ENCODE measurements at regions of chr7 and their contacts with region 1.

Region 1: GRCh38 chr7:139118234-139118804 is 8.8 kb upstream of the ZC3HAV1 start:
- DNase-seq: peak; percentile 80
- ATAC-seq: peak; percentile 83
- H3K4me3 ChIP-seq: peak overlapping the region; percentile 46; the same call in 1 of the 2 replicates
- H3K27ac ChIP-seq: peak overlapping the region; percentile 64
- H3K4me1 ChIP-seq: peaks cover 25% of the 10 kb centered on the region
- H3K27me3 ChIP-seq: no peaks in the 10 kb centered on the region
- CTCF ChIP-seq: peak in 2 of 3 experiments; percentile 17 to 27; a peak in 3 of 6 replicates
- EP300 ChIP-seq: peak; percentile 87 to 89; a peak in 2 of 4 replicates
- POLR2A ChIP-seq: no peak
- RAD21 ChIP-seq: no peak

Region 2: DNA sequence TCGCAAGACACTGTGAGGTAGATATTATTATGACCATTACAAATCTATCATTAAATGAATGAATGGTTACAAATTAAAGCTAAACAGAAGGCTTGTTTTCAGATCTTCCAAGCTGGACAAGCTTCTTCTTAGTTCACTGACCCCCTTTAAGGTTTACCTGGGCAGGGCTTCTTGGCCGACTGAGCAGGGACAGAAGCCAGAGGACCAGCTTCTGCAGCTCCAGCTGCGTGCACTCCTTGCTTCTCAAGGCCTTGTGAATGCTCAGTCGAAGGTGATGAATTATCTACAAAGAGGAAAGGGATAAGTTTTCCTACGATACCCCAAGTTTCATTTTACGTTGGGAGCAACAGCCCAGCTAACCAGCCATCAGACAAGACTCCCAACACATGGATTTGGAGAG is 91.8 kb before region 1 on chr7:
- CTCF ChIA-PET with region 1: no interaction called
- POLR2A ChIA-PET with region 1: no interaction called
- RAD21 ChIA-PET with region 1: no interaction called
- SMC1A ChIA-PET with region 1: no interaction called
- in situ Hi-C with region 1: no loop called
- intact Hi-C with region 1: no loop called
- DNase-seq: no peak
- ATAC-seq: no peak
- H3K4me3 ChIP-seq: no peak overlapping the region
- H3K27ac ChIP-seq: no peak overlapping the region
- H3K4me1 ChIP-seq: no peaks in the 10 kb centered on the region
- H3K27me3 ChIP-seq: no peaks in the 10 kb centered on the region
- CTCF ChIP-seq: no peak
- EP300 ChIP-seq: no peak
- POLR2A ChIP-seq: no peak
- RAD21 ChIP-seq: no peak

Region 3: GRCh38 chr7:139095194-139095659 is 23.1 kb before region 1 on chr7:
- CTCF ChIA-PET with region 1: interaction called, 10 read pairs
- POLR2A ChIA-PET with region 1: interaction called, 11 read pairs
- RAD21 ChIA-PET with region 1: interaction called, 14 read pairs
- SMC1A ChIA-PET with region 1: interaction called, 13 read pairs
- in situ Hi-C with region 1: no loop called
- intact Hi-C with region 1: no loop called
- DNase-seq: peak; percentile 88
- ATAC-seq: peak; percentile 99
- H3K4me3 ChIP-seq: peak overlapping the region; percentile 65
- H3K27ac ChIP-seq: peak overlapping the region; percentile 70
- H3K4me1 ChIP-seq: peaks cover 20% of the 10 kb centered on the region
- H3K27me3 ChIP-seq: no peaks in the 10 kb centered on the region
- CTCF ChIP-seq: 0 out of 6 replicates have a peak, but pooled peaks of 2 of the 3 experiments have one; percentile 2 to 5
- EP300 ChIP-seq: peak in 1 of 2 experiments; percentile 38; a peak in 1 of 4 replicates
- POLR2A ChIP-seq: peak; percentile 74
- RAD21 ChIP-seq: no peak

Region 4: GRCh38 chr7:139104091-139104450 is 14.2 kb before region 1 on chr7:
- CTCF ChIA-PET with region 1: no interaction called
- POLR2A ChIA-PET with region 1: interaction called, 10 read pairs
- RAD21 ChIA-PET with region 1: interaction called, 9 read pairs
- SMC1A ChIA-PET with region 1: interaction called, 13 read pairs
- in situ Hi-C with region 1: no loop called
- intact Hi-C with region 1: loop called (anchors 1 kb)
- DNase-seq: no peak
- ATAC-seq: peak; percentile 7
- H3K4me3 ChIP-seq: peak overlapping the region; percentile 72
- H3K27ac ChIP-seq: peak overlapping the region; percentile 74
- H3K4me1 ChIP-seq: peaks cover 3% of the 10 kb centered on the region; the same call in 1 of the 2 replicates
- H3K27me3 ChIP-seq: no peaks in the 10 kb centered on the region
- CTCF ChIP-seq: no peak
- EP300 ChIP-seq: no peak
- POLR2A ChIP-seq: no peak
- RAD21 ChIP-seq: no peak

Region 5: DNA sequence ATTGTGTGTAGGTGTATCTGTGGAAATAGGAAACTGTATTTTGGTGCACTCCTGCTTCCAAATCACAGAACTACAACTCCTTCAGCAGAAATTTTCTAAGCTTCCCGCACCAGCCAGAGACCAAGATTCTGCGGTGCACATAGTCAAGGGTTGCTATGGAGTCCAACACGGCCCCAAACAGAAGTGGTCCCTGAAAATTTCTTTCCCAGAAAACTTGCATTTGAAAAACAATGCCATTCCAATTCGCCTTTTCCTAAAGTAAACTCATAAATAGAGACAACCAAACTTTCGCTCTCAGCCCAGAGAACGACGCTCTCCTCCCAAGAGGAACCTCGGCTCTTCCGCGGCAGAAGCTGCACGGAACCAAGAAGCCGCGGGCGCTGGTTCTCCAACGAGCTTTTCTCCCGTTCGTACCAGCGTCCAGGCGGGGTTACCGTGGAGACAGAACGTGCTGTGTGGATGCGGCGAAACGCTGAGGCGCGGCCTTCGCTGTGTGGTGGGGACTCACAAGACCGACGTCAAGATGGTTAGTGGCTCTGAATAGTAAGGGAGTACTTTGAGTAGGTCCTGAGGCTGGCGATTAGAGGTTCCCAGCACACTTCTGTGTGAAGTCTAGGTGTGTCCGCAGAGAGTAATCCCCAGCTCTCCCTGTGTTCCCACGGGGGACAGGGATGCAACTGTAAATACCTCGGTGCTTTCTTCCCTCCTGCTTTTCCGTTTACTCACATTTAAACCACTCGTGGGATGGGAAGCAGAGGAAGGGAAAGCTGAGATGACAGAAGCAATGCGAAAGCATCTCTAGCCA is 15.2 kb after region 1 on chr7:
- CTCF ChIA-PET with region 1: interaction called, 13 read pairs
- POLR2A ChIA-PET with region 1: interaction called, 7 read pairs
- RAD21 ChIA-PET with region 1: interaction called, 6 read pairs
- SMC1A ChIA-PET with region 1: interaction called, 20 read pairs
- in situ Hi-C with region 1: no loop called
- intact Hi-C with region 1: no loop called
- DNase-seq: peak; percentile 53
- ATAC-seq: peak; percentile 98
- H3K4me3 ChIP-seq: peak overlapping the region; percentile 77
- H3K27ac ChIP-seq: no peak overlapping the region; the same call in 1 of the 2 replicates
- H3K4me1 ChIP-seq: peaks cover 13% of the 10 kb centered on the region; the same call in 1 of the 2 replicates
- H3K27me3 ChIP-seq: no peaks in the 10 kb centered on the region
- CTCF ChIP-seq: no peak
- EP300 ChIP-seq: 0 out of 4 replicates have a peak, but pooled peaks of 1 of the 2 experiments have one; percentile 29
- POLR2A ChIP-seq: peak; percentile 75
- RAD21 ChIP-seq: peak; percentile 22; the same call in 1 of the 2 replicates

Region 6: GRCh38 chr7:139359366-139360209 is 241.3 kb after region 1 on chr7 and contains the start of gene LUC7L2:
- CTCF ChIA-PET with region 1: no interaction called
- POLR2A ChIA-PET with region 1: no interaction called
- RAD21 ChIA-PET with region 1: no interaction called
- SMC1A ChIA-PET with region 1: no interaction called
- in situ Hi-C with region 1: loop called (anchors 5 kb)
- intact Hi-C with region 1: loop called (anchors 5 kb)
- DNase-seq: peak; percentile 94
- ATAC-seq: peak; percentile 84
- H3K4me3 ChIP-seq: peak within 1 kb of the TSS; percentile 95
- H3K27ac ChIP-seq: peak within 1 kb of the TSS; percentile 98
- H3K4me1 ChIP-seq: no peaks in the 10 kb centered on the region
- H3K27me3 ChIP-seq: no peaks in the 10 kb centered on the region
- CTCF ChIP-seq: peak in 1 of 3 experiments; percentile 7; a peak in 2 of 6 replicates
- EP300 ChIP-seq: peak in 1 of 2 experiments; percentile 36; a peak in 1 of 4 replicates
- POLR2A ChIP-seq: peak; percentile 97
- RAD21 ChIP-seq: no peak
- polyA plus RNA-seq, gene LUC7L2: 31.7 to 37.8 TPM

Region 7: DNA sequence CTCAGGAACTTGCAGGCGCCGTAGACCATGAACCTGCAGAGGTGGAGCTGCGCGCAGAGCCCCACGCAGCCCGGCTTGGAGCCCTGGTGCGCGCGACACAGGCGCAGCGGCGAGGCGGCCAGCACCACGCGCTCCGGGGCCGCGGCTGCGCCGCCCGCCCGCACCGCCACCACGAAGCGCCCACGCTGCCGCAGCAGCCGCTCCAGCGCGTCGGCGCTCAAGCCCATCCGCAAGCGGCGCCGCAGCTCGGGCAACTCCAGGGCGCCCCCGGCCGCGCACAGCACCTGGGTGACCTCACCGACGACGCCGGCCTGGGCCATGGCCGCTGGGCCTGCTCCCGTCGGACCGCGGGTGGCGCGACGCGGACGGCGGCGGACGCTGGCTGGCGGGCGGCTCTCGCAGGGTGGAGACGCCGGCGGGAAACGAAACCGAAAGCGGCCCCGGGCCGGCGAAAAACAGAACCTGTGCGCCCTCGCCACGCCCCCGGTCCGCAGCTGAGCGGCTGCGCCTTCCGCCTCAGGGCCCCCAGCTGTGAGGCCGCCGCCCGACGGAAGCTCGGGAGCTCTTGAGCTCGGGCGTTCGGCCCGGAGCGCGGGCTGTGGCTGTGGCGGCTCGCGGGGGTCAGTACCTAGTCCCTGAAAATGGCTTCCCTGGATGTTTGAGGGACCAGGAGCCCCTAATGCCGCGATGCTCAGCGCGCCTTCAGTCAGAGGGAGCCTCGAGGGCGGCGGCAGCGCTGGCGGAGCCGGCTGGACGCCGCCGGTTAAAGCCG is 944.4 kb after region 1 on chr7 and contains the start of gene PARP12:
- CTCF ChIA-PET with region 1: no interaction called
- POLR2A ChIA-PET with region 1: no interaction called
- RAD21 ChIA-PET with region 1: no interaction called
- SMC1A ChIA-PET with region 1: no interaction called
- in situ Hi-C with region 1: loop called (anchors 10 kb)
- intact Hi-C with region 1: no loop called
- DNase-seq: peak; percentile 36
- ATAC-seq: peak; percentile 87
- H3K4me3 ChIP-seq: peak within 1 kb of the TSS; percentile 74
- H3K27ac ChIP-seq: no peak within 1 kb of the TSS; the same call in 1 of the 2 replicates
- H3K4me1 ChIP-seq: peaks cover 11% of the 10 kb centered on the region
- H3K27me3 ChIP-seq: no peaks in the 10 kb centered on the region; a peak in 2 of 4 replicates
- CTCF ChIP-seq: peak in 1 of 3 experiments; percentile 9; a peak in 1 of 6 replicates
- EP300 ChIP-seq: no peak
- POLR2A ChIP-seq: peak; percentile 81
- RAD21 ChIP-seq: no peak
- polyA plus RNA-seq, gene PARP12: 4.9 to 6.0 TPM